ENCODE measurements at regions of chr7 and their contacts with region 1.

Region 1: GRCh38 chr7:144481833-144482232 is 78.3 kb upstream of the NOBOX start:
- DNase-seq: no peak
- H3K4me3 Mint-ChIP-seq: no peak overlapping the region
- H3K27ac Mint-ChIP-seq: no peak overlapping the region
- H3K4me1 Mint-ChIP-seq: no peaks in the 10 kb centered on the region
- H3K27me3 Mint-ChIP-seq: no peaks in the 10 kb centered on the region
- CTCF ChIP-seq: no peak

Region 2: DNA sequence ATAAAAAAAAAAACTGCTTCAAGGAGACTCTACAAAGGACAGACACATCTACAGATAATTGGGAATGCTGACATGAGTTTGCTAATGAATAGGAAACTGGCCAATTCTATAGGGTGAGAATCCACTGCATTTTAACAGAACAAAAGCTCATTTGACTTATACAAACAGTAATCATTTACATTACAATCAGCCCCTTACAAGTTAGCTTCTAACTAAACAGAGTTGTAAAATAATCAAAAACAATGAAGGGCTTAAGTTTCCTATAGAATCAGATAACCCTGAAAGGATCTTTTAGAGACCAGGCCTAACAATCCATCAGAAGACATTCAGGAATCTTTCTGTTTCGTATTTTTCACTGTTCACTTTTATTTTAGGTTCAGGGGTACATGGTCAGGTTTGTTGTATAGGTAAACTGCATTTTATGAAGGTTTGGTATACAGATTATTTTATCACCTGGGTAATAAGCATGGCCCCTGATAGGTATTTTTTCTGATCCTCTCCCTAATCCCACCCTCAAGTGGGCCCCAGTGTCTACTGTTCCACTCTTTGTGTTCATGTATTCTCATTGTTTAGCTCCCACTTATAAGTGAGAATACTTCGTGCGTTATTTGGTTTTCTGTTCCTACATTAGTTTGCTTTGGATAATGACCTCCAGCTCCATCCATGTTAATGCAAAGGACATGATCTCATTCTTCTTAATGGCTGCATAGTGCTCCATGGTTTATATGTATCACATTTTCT is 53.0 kb after region 1 on chr7:
- CTCF ChIA-PET with region 1: interaction called, 3 read pairs
- POLR2A ChIA-PET with region 1: no interaction called
- intact Hi-C with region 1: loop called (anchors 5 kb)
- DNase-seq: no peak
- H3K4me3 Mint-ChIP-seq: no peak overlapping the region
- H3K27ac Mint-ChIP-seq: no peak overlapping the region
- H3K4me1 Mint-ChIP-seq: no peaks in the 10 kb centered on the region
- H3K27me3 Mint-ChIP-seq: no peaks in the 10 kb centered on the region
- CTCF ChIP-seq: no peak